ENCODE measurements at regions of chr14 and their contacts with region 1.

Region 1: DNA sequence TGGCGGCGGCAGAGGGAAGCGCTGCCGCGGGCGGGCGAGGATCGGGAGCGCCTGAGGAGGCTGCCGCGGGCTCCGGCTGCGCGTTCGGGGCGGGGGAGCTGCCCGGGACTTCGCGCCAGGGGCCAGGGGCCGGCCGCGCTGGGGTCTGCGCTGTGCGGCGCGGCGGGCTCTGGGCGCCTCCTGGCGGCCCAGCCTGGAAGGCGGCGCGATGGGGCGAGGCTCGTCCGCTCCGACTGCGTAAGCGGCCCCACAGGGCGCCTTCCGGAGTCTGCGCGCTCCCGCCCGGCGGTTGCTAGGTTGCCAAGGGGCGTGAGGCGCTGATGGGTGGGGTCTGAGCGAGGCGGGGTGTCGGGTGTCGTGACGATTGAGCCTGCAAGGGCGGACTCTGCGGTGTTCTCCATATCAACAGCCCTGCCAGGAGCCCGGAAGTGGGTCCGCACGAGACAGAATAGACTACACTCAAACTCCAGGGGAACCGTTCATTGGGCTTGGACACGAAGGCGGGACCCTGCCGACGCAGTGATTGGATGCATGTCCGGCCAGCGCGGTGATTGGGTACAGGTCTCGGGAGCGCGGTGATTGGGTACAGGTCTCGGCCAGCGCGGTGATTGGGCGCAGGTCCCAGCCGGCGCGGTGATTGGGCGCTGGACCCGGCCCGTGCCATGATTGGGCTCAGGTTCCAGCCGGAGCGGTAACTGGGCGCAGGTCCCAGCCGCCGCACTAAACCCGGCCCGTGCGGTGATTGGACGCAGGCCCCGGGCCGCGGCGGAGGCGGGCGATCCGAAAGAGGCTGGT is at the start of gene TEDC1:
- DNase-seq: peak; percentile 99
- total RNA-seq, gene TEDC1: 3.8 TPM

Region 2: GRCh38 chr14:105255021-105255507 is 235.7 kb before region 1 on chr14:
- intact Hi-C with region 1: no loop called
- DNase-seq: no peak

Region 3: DNA sequence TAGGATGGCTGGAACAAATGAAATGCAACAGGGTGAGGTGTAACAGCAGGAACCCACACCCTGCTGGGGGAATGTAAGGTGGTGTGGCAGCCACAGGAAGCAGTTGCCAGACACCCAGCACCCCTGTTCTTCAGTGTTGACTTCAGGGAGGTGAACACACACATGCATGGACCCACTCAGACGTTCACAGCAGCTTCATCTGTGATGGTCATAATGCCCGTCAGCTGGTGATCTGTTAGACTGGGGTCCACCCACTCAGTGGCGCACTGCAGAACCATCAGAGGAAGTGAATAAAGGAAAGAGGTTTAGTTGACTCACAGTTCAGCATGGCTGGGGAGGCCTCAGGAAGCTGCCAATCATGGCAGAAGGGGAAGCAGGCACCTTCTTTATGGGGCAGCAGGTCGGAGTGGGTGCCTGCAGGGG is 115.1 kb before region 1 on chr14:
- intact Hi-C with region 1: loop called (anchors 1 kb)
- DNase-seq: no peak

Region 4: DNA sequence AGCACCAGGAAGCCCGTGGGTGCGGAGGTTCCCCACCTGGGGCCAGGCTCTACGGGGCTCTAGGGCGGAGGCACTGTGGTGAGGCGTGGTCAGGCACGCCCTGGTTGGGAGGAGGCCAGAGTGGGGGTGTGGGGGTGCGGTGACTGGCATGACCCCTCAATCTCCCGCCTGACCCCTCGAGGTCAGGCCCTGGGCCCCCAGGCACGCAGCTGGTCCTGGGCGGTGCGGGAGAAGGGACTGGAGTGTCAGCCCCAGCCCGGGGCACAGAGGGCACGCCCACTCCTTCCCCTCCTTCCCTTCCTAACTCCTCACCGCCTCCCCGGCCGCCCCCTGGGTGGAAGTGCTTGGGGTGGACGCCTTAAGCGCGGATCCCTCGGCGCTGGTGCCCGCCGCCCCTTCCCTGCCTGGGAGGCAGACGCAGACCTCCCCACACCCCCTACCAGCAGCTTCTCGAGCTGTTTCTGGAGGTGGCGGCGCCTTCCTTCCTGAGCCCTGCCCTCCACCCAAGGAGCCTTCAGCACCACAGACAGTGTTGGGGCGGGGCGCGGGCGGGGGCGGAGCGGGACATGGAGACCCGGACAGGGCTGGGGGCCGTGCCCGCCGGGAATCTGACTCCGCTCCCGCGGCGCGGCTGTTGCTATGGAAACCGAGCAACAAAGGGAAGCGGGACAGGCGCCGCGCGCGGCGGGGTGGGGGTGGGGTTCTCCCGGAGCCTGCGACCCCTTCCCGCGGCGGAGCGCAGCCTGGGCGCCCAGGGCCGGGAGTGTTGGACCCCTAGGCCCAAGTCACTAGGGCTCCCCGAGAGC is 16.9 kb before region 1 on chr14:
- intact Hi-C with region 1: loop called (anchors 2 kb)
- DNase-seq: peak; percentile 96

Region 5: GRCh38 chr14:105527661-105528581 is 37.2 kb after region 1 on chr14:
- intact Hi-C with region 1: loop called (anchors 5 kb)
- DNase-seq: peak; percentile 90

Region 6: GRCh38 chr14:105547701-105548221 is 57.0 kb after region 1 on chr14:
- intact Hi-C with region 1: no loop called
- DNase-seq: no peak

Region 7: GRCh38 chr14:105562713-105563346 is 72.1 kb after region 1 on chr14:
- intact Hi-C with region 1: no loop called
- DNase-seq: no peak

Region 8: DNA sequence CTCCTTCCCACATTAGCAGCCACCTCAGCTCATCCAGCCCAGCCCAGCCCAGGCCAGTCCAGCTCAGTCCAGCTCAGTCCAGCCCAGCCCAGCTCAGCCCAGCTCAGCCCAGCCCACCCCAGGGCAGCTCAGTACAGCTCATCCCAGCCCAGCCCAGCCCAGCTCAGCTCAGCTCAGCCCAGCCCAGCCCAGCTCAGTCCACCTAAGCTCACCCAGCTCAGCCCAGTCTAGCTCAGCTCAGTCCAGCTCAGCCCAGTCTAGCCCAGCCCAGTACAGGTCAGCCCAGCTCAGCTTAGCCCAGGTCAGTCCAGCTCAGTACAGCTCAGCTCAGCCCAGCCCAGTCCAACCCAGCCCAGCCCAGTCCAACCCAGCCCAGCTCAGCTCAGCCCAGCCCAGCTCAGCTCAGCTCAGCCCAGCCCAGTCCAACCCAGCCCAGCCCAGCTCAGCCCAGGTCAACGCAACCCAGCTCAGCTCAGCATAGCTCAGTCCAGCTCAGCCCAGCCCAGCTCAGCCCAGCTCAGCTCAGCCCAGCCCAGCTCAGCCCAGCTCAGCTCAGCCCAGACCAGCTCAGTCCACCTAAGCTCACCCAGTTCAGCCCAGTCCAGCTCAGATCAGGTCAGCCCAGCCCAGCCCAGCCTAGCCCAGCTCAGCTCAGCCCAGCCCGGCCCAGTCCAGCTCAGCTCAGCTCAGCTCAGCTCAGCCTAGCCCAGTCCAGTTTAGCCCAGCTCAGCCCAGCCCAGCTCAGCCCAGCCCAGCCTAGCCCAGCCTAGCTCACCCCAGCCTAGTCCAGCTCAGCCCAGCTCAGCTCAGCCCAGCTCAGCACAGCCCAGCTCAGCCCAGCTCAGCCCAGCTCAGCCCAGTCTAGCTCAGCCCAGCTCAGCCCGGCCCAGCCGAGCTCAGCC is 98.6 kb after region 1 on chr14:
- intact Hi-C with region 1: no loop called
- DNase-seq: peak; percentile 69